ENCODE measurements at regions of chr14 and their contacts with region 1.

Region 1: GRCh38 chr14:102362545-102363181 is at the starts of genes CINP and TECPR2:
- DNase-seq: peak; percentile 95
- ATAC-seq: peak; percentile 97
- H3K4me3 ChIP-seq: peak within 1 kb of the TSS; percentile 55 to 90 (median 82)
- H3K4me3 Mint-ChIP-seq: no peak within 1 kb of the TSS
- H3K27ac ChIP-seq: peak within 1 kb of the TSS; percentile 61 to 93
- H3K27ac Mint-ChIP-seq: peak within 1 kb of the TSS; percentile 92
- H3K4me1 ChIP-seq: peaks cover 16 to 18% of the 10 kb centered on the region in 2 donors
- H3K4me1 Mint-ChIP-seq: peaks cover 25% of the 10 kb centered on the region
- H3K27me3 ChIP-seq: no peaks in the 10 kb centered on the region
- H3K27me3 Mint-ChIP-seq: no peaks in the 10 kb centered on the region
- CTCF ChIP-seq: no peak
- total RNA-seq, gene CINP: 23.7 and 28.8 TPM in 2 replicates
- total RNA-seq, gene TECPR2: 10.8 and 11.2 TPM in 2 replicates

Region 2: GRCh38 chr14:101761032-101761880 is 601.4 kb before region 1 on chr14 and contains the start of gene PPP2R5C:
- CTCF ChIA-PET with region 1: no interaction called
- POLR2A ChIA-PET with region 1: no interaction called
- intact Hi-C with region 1: loop called (anchors 2 kb)
- DNase-seq: peak; percentile 93
- ATAC-seq: peak; percentile 63
- H3K4me3 ChIP-seq: peak within 1 kb of the TSS; percentile 73 to 96 (median 87)
- H3K4me3 Mint-ChIP-seq: peak within 1 kb of the TSS; percentile 94
- H3K27ac ChIP-seq: peak within 1 kb of the TSS; percentile 66 to 78
- H3K27ac Mint-ChIP-seq: peak within 1 kb of the TSS; percentile 92
- H3K4me1 ChIP-seq: peaks cover 11 to 12% of the 10 kb centered on the region in 2 donors
- H3K4me1 Mint-ChIP-seq: peaks cover 14% of the 10 kb centered on the region
- H3K27me3 ChIP-seq: no peaks in the 10 kb centered on the region
- H3K27me3 Mint-ChIP-seq: no peaks in the 10 kb centered on the region
- CTCF ChIP-seq: no peak
- total RNA-seq, gene PPP2R5C: 330 and 337 TPM in 2 replicates

Region 3: GRCh38 chr14:101809671-101810514 is 552.8 kb before region 1 on chr14:
- CTCF ChIA-PET with region 1: no interaction called
- POLR2A ChIA-PET with region 1: no interaction called
- intact Hi-C with region 1: no loop called
- DNase-seq: peak; percentile 93
- ATAC-seq: peak; percentile 93
- H3K4me3 ChIP-seq: peak overlapping the region; percentile 80 to 100 (median 97)
- H3K4me3 Mint-ChIP-seq: peak overlapping the region; percentile 92
- H3K27ac ChIP-seq: peak overlapping the region; percentile 95 to 100
- H3K27ac Mint-ChIP-seq: peak overlapping the region; percentile 98
- H3K4me1 ChIP-seq: peaks cover 39 to 43% of the 10 kb centered on the region in 2 donors
- H3K4me1 Mint-ChIP-seq: peaks cover 45% of the 10 kb centered on the region
- H3K27me3 ChIP-seq: no peaks in the 10 kb centered on the region
- H3K27me3 Mint-ChIP-seq: no peaks in the 10 kb centered on the region
- CTCF ChIP-seq: no peak

Region 4: GRCh38 chr14:102139248-102140026 is 223.2 kb before region 1 on chr14 and contains the start of gene WDR20:
- CTCF ChIA-PET with region 1: no interaction called
- POLR2A ChIA-PET with region 1: no interaction called
- intact Hi-C with region 1: loop called (anchors 5 kb)
- DNase-seq: peak; percentile 98
- ATAC-seq: peak; percentile 93
- H3K4me3 ChIP-seq: peak within 1 kb of the TSS; percentile 66 to 94 (median 88)
- H3K4me3 Mint-ChIP-seq: peak within 1 kb of the TSS; percentile 89
- H3K27ac ChIP-seq: peak within 1 kb of the TSS; percentile 88 to 90
- H3K27ac Mint-ChIP-seq: peak within 1 kb of the TSS; percentile 94
- H3K4me1 ChIP-seq: peaks cover 14 to 16% of the 10 kb centered on the region in 2 donors
- H3K4me1 Mint-ChIP-seq: peaks cover 24% of the 10 kb centered on the region
- H3K27me3 ChIP-seq: no peaks in the 10 kb centered on the region
- H3K27me3 Mint-ChIP-seq: no peaks in the 10 kb centered on the region
- CTCF ChIP-seq: no peak
- total RNA-seq, gene WDR20: 62.8 and 64.0 TPM in 2 replicates

Region 5: DNA sequence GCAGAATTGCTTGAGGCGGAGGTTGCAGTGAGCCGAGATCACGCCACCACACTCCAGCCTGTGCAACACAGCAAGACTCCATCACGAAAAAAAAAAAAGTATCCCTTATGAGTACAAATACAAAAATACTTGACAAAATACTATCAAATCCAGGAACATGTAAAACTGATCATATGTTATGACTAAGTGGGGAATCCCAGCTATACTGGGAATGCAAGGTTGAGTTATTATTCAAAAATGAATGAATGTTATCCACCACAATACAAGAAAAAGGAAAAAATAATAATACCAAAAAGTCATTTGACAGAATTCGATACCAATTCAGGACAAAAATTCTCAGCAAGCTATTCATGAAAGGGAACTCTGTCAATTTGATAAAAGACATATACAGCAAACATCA is 90.3 kb before region 1 on chr14:
- CTCF ChIA-PET with region 1: no interaction called
- POLR2A ChIA-PET with region 1: no interaction called
- intact Hi-C with region 1: no loop called
- DNase-seq: no peak
- ATAC-seq: no peak
- H3K4me3 ChIP-seq: no peak overlapping the region
- H3K4me3 Mint-ChIP-seq: no peak overlapping the region
- H3K27ac ChIP-seq: no peak overlapping the region
- H3K27ac Mint-ChIP-seq: no peak overlapping the region
- H3K4me1 ChIP-seq: no peaks in the 10 kb centered on the region
- H3K4me1 Mint-ChIP-seq: no peaks in the 10 kb centered on the region
- H3K27me3 ChIP-seq: no peaks in the 10 kb centered on the region
- H3K27me3 Mint-ChIP-seq: no peaks in the 10 kb centered on the region
- CTCF ChIP-seq: no peak

Region 6: DNA sequence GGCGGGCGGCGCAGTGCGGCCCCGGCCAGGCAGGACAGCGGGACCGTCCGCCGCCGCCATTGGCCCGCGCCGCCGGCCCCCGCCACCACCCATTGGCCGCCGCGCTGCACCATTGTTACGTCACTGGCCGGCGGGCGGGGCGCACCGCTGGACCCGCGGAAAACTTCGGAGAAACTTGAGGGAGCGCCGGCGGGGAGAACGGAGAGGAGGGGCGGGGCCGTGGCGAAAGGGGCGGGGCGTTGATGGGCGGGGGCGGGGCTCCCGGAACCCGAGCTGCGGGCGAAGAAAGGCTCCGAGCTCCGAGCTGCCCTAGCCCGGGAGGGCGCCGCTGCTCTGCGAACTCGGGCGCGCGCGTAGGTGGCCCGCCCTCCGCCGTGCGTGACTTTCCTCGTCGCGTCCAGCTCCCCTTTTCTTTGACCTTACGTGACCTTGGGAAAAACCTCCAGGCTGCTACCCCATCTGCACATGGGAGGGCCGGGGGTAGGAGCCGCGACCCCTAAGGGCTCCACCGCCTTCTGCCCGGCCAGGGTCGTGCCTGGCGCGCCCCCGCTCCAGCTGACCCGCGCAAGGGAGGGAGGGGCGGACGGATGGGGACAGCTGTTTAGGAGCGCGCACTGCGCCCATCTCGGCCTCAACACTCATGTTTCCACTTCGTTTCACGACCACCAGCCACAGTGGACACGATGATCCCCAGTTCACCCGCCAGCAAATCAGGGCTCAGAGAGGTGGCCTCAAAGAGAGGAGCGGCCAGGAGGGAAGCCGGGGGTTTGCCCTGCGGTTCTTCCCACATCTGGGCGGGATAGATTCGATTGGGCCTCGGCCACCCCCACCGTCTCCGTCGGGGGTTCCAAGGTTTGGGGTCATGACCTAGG is 147.3 kb after region 1 on chr14 and contains the start of gene ANKRD9:
- CTCF ChIA-PET with region 1: interaction called, 3 read pairs
- POLR2A ChIA-PET with region 1: no interaction called
- intact Hi-C with region 1: loop called (anchors 5 kb)
- DNase-seq: peak; percentile 86
- ATAC-seq: peak; percentile 84
- H3K4me3 ChIP-seq: peak within 1 kb of the TSS; percentile 17 to 76 (median 72)
- H3K4me3 Mint-ChIP-seq: peak within 1 kb of the TSS; percentile 90
- H3K27ac ChIP-seq: no peak within 1 kb of the TSS
- H3K27ac Mint-ChIP-seq: peak within 1 kb of the TSS; percentile 68
- H3K4me1 ChIP-seq: peaks cover 15 to 17% of the 10 kb centered on the region in 2 donors
- H3K4me1 Mint-ChIP-seq: peaks cover 12% of the 10 kb centered on the region
- H3K27me3 ChIP-seq: peaks cover 0 to 11% (median 0%) of the 10 kb centered on the region in 4 experiments
- H3K27me3 Mint-ChIP-seq: peaks cover 8% of the 10 kb centered on the region
- CTCF ChIP-seq: no peak
- total RNA-seq, gene ANKRD9: 1.4 and 1.8 TPM in 2 replicates

Region 7: GRCh38 chr14:103385152-103385993 is 1022.7 kb after region 1 on chr14 and contains the start of gene MARK3:
- CTCF ChIA-PET with region 1: no interaction called
- POLR2A ChIA-PET with region 1: no interaction called
- intact Hi-C with region 1: loop called (anchors 5 kb)
- DNase-seq: peak; percentile 98
- ATAC-seq: peak; percentile 86
- H3K4me3 ChIP-seq: peak within 1 kb of the TSS; percentile 68 to 96 (median 90)
- H3K4me3 Mint-ChIP-seq: peak within 1 kb of the TSS; percentile 99
- H3K27ac ChIP-seq: peak within 1 kb of the TSS; percentile 90 to 91
- H3K27ac Mint-ChIP-seq: peak within 1 kb of the TSS; percentile 98
- H3K4me1 ChIP-seq: peaks cover 24 to 33% of the 10 kb centered on the region in 2 donors
- H3K4me1 Mint-ChIP-seq: peaks cover 41% of the 10 kb centered on the region
- H3K27me3 ChIP-seq: no peaks in the 10 kb centered on the region
- H3K27me3 Mint-ChIP-seq: peaks cover 13% of the 10 kb centered on the region
- CTCF ChIP-seq: peak; percentile 40
- total RNA-seq, gene MARK3: 139 and 142 TPM in 2 replicates

Measured in B cell (primary cell).